Astrocyte of the cerebellum (primary cell): ENCODE measurements at regions of chr9 and their contacts with region 1.

Region 1: GRCh38 chr9:25284365-25284764 is 393.9 kb downstream of the TUSC1 start:
- DNase-seq: no peak
- H3K4me3 ChIP-seq: no peak overlapping the region
- CTCF ChIP-seq: no peak

Region 2: GRCh38 chr9:25602400-25603046 is 318.2 kb after region 1 on chr9:
- in situ Hi-C with region 1: loop called (anchors 10 kb)
- DNase-seq: no peak
- H3K4me3 ChIP-seq: no peak overlapping the region
- CTCF ChIP-seq: no peak